ENCODE measurements at regions of chr3 and their contacts with region 1.

Region 1: DNA sequence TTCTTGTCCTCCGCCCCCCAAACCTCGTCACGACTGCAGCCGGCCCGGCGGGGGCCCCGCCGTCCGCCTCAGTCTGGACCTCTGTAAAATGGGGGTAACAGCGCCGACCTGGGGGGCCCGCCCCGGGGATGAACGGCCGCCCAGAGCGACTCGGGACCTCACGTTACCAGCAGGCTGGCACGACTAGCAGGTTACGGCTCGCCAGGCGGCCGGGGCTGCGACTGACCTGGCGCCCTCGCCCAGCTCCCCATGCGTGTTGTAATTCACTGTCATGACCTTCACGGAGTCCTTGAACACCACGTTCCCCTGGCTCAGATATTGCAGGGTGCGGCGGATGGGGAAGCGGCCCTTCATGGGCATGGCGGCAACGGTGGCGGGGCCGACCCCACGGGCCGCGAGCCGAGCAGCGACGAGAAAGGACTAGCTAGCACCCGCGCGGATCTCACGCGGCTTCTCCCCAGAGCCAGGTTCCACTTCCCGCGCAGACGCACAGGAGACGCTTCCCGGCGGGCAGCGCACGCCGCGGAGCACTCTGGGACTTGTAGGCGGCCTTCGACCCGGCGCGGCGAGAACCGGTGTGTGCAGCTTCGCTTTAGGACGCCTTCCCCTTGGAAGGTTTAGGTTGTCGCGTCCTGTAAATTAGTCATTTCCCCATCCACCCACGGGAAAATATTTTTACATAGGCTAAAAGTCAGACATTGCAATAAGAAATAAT is at the start of gene MRPS25:
- DNase-seq: peak; percentile 90
- ATAC-seq: peak; percentile 99
- H3K4me3 Mint-ChIP-seq: peak within 1 kb of the TSS; percentile 95
- H3K27ac Mint-ChIP-seq: peak within 1 kb of the TSS; percentile 95
- H3K4me1 Mint-ChIP-seq: peaks cover 16% of the 10 kb centered on the region
- H3K27me3 Mint-ChIP-seq: peaks cover 2% of the 10 kb centered on the region
- total RNA-seq, gene MRPS25: 59.3 to 61.1 TPM

Region 2: GRCh38 chr3:14976317-14976716 is 88.7 kb before region 1 on chr3:
- POLR2A ChIA-PET with region 1: no interaction called
- DNase-seq: no peak
- ATAC-seq: no peak
- H3K4me3 Mint-ChIP-seq: no peak overlapping the region
- H3K27ac Mint-ChIP-seq: no peak overlapping the region
- H3K4me1 Mint-ChIP-seq: peaks cover 7% of the 10 kb centered on the region
- H3K27me3 Mint-ChIP-seq: no peaks in the 10 kb centered on the region

Region 3: DNA sequence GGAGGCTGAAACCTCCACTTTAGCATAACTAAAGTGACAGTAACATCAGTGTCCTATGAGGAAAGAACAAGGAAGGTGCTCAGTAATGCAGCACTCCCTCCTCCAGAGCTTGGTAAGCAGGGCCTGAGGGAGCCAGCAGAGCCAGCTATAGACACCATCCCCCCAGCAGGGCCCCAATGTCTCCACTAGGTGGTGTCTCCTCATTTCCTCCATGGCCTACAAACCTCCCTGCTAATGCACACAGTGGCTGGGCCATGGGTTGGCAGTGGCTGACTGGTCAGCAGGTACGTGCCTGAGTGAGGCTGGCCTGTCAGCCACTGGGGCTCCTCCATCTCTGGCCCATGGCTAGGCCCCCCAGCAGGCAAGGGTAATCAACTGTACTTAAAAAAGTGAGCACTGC is 13.5 kb before region 1 on chr3:
- POLR2A ChIA-PET with region 1: interaction called, 11 read pairs
- DNase-seq: peak; percentile 49
- ATAC-seq: peak; percentile 82
- H3K4me3 Mint-ChIP-seq: no peak overlapping the region
- H3K27ac Mint-ChIP-seq: peak overlapping the region; percentile 38
- H3K4me1 Mint-ChIP-seq: peaks cover 19% of the 10 kb centered on the region
- H3K27me3 Mint-ChIP-seq: no peaks in the 10 kb centered on the region

Region 4: DNA sequence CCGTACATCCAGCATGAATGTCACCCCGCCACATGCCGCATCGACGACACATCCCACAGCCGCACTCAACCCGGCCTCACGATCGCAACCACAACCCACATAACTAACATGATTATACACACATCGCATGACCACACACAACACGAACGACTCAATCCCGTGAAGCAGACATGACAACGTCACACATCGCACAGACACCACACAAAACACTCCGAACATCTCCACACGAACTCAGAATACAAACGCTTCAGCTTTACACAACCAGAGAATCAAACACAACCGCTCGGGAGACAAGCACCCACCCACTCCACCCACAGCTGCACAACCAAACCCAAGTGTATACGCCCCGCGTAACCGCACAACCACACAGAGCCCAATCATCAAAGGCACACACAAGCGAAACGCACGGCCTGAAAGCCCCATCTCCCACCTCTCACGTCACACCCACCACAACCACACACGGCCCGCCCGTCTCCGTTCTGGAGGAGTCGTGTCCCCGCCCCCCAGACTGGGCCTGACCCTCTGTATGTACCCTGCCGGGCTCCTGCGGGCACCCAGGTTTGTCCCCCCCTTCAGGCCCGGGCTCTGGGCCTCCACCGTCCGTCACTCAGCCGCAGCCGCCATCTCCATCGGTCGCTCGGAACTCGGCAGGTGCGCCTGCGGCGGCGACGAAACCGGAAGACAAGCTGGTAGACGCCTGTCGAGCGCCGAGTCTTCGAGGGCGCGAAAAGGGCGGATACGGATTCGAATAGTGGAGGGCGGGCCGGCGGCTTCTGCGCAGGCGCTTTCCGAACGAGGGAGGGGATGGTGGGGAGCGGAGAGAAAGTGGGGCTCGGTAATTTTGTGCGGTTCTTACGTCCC is 33.7 kb after region 1 on chr3 and contains the start of gene RBSN:
- POLR2A ChIA-PET with region 1: interaction called, 14 read pairs
- DNase-seq: peak; percentile 94
- ATAC-seq: peak; percentile 80
- H3K4me3 Mint-ChIP-seq: peak within 1 kb of the TSS; percentile 92
- H3K27ac Mint-ChIP-seq: peak within 1 kb of the TSS; percentile 94
- H3K4me1 Mint-ChIP-seq: peaks cover 30% of the 10 kb centered on the region
- H3K27me3 Mint-ChIP-seq: peaks cover 8% of the 10 kb centered on the region
- total RNA-seq, gene RBSN: 21.3 to 21.8 TPM

Measured in activated naive CD8-positive, alpha-beta T cell treated with anti-CD3 and anti-CD28 coated beads, Interleukin-2, amount 10 ng/mL, durations not matched to agents 7 days and 5 days (primary cell).